ENCODE measurements at regions of chr15 and their contacts with region 1.

Region 1: DNA sequence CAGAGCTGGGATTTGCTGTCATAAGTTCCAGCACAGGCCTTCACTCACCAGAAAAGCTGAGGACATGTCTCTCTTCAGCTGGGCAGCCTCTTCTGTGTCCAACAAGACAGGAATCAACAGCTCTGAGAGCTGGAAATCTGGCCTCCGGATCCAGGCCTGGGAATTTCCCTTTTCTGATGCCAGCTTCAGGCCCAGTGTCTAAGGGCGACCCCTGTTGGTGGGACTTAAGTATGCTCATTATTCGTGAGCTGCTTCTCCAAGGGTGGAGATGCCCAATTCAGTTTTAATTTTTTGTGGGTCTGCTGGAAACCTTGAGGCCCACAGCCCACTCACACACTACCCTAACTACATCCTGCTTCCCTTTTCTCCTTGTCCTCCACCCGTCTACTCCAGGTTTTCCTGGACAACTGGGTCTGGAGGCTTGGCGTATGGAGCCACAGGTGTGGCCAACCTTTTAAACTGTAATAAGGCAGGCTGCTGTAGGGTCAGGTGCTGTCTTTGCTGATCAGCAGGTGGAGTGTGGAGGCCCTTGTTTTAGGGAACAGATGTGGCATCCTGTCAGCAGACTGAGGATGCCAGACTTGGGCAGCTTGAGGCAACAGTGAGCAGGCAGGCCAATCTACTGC is 2.6 kb upstream of the CEMIP start:
- DNase-seq: peak; percentile 56 to 63 (median 60)
- ATAC-seq: peak; percentile 54; the same call in 1 of the 3 replicates
- H3K4me3 ChIP-seq: no peak overlapping the region
- H3K27ac ChIP-seq: no peak overlapping the region
- H3K4me1 ChIP-seq: peaks cover 0 to 18% of the 10 kb centered on the region in 2 experiments; a peak in 2 of 5 replicates
- H3K27me3 ChIP-seq: peaks cover 15 to 31% of the 10 kb centered on the region in 2 experiments; a peak in 4 of 5 replicates
- CTCF ChIP-seq: peak; percentile 74 to 83 (median 83)
- EP300 ChIP-seq: no peak
- POLR2A ChIP-seq: no peak
- RAD21 ChIP-seq: peak; percentile 54 to 81

Region 2: GRCh38 chr15:80072285-80072994 is 704.1 kb before region 1 on chr15:
- CTCF ChIA-PET with region 1: no interaction called
- POLR2A ChIA-PET with region 1: no interaction called
- in situ Hi-C with region 1: no loop called
- intact Hi-C with region 1: no loop called
- DNase-seq: peak; percentile 56 to 88 (median 68)
- ATAC-seq: peak; percentile 89
- H3K4me3 ChIP-seq: peak overlapping the region; percentile 42
- H3K27ac ChIP-seq: peak overlapping the region; percentile 55; the same call in 2 of the 3 replicates
- H3K4me1 ChIP-seq: peaks cover 9 to 15% of the 10 kb centered on the region in 2 experiments; a peak in 4 of 5 replicates
- H3K27me3 ChIP-seq: no peaks in the 10 kb centered on the region
- CTCF ChIP-seq: no peak
- EP300 ChIP-seq: no peak
- POLR2A ChIP-seq: 0 out of 2 replicates have a peak, but pooled peaks have one; percentile 37
- RAD21 ChIP-seq: no peak; a peak in 1 of 4 replicates

Region 3: DNA sequence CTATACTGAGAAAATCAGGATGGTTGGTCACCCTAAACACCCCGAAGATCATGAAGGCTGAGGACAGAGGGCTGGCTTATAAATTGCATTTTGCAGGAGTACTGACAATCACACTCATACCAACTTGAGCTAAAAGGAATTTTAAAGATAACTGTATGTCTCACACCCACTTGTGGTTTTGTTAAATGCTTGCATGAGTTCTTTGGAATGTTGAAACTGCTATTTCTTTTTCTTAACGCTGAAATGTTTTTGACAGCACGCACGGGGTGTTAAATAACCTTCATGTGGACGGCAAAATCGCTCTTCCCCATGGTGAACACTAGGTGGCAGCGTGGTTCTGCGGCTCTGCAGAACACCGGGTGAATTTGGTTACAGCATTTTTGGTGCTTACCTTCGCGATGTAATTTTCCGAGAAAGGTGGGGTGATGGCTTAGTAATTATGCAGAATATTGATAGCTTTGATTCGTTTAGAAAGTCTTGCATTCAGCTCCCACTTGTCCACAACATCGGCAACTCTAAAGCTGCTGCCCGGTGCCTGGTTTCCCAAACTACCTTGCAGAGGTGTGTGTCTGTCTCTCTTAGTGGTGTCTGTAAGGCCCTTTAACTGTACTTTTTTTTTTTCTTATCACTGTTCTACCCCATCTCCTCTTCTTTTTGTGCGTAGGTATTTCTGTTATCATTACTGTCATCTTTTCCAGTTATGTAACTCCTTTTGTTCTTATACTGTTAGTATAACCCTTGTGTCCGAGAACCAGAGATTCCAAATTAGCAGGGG is 320.7 kb before region 1 on chr15:
- CTCF ChIA-PET with region 1: interaction called, 11 read pairs
- POLR2A ChIA-PET with region 1: no interaction called
- in situ Hi-C with region 1: loop called (anchors 5 kb)
- intact Hi-C with region 1: loop called (anchors 1 kb)
- DNase-seq: peak; percentile 69 to 71 (median 71)
- ATAC-seq: peak; percentile 87
- H3K4me3 ChIP-seq: no peak overlapping the region
- H3K27ac ChIP-seq: no peak overlapping the region
- H3K4me1 ChIP-seq: no peaks in the 10 kb centered on the region
- H3K27me3 ChIP-seq: peaks cover 0 to 25% of the 10 kb centered on the region in 2 experiments; a peak in 2 of 5 replicates
- CTCF ChIP-seq: peak; percentile 86 to 95 (median 92)
- EP300 ChIP-seq: no peak
- POLR2A ChIP-seq: no peak
- RAD21 ChIP-seq: peak; percentile 82 to 86

Region 4: GRCh38 chr15:80567721-80568157 is 208.8 kb before region 1 on chr15:
- CTCF ChIA-PET with region 1: interaction called, 5 read pairs
- POLR2A ChIA-PET with region 1: interaction called, 4 read pairs
- in situ Hi-C with region 1: no loop called
- intact Hi-C with region 1: loop called (anchors 1 kb)
- DNase-seq: peak; percentile 22 to 56 (median 40)
- ATAC-seq: peak; percentile 86
- H3K4me3 ChIP-seq: no peak overlapping the region
- H3K27ac ChIP-seq: no peak overlapping the region
- H3K4me1 ChIP-seq: no peaks in the 10 kb centered on the region
- H3K27me3 ChIP-seq: peaks cover 4 to 40% of the 10 kb centered on the region in 2 experiments; a peak in 3 of 5 replicates
- CTCF ChIP-seq: peak; percentile 61 to 93 (median 89)
- EP300 ChIP-seq: no peak
- POLR2A ChIP-seq: no peak
- RAD21 ChIP-seq: peak; percentile 65 to 78

Region 5: DNA sequence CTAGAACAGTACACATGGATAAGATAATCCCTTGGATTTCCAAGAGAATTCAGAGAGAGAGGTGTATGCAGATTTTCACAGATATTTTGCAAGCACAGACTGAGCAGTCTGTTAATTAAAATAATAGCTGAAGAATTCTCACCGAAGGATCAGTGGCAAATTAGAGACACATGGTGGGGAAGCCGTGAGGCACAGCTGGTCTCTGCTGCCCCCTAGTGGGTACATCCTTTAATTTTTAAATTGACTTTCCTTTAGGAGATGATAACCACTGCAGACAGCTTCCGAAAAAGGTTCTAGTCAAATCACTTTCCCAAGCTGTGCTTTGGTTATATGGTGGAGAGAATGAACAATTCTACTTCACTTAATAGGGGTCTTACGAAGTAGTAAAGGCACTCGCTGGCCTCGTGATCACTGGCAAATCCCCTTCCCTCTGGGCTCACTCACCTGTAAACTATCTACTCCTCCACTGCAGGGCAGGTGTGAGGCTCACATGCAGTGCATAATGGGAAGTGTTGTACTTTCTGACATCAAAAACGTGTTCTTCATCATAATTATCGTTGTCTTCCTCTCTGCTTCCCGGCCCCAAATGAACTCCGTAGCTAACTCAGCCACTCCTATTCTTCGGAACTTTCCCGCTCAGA is 193.6 kb after region 1 on chr15:
- CTCF ChIA-PET with region 1: interaction called, 5 read pairs
- POLR2A ChIA-PET with region 1: no interaction called
- in situ Hi-C with region 1: no loop called
- intact Hi-C with region 1: loop called (anchors 2 kb)
- DNase-seq: peak; percentile 66 to 81 (median 70)
- ATAC-seq: peak; percentile 87
- H3K4me3 ChIP-seq: no peak overlapping the region
- H3K27ac ChIP-seq: no peak overlapping the region
- H3K4me1 ChIP-seq: no peaks in the 10 kb centered on the region
- H3K27me3 ChIP-seq: no peaks in the 10 kb centered on the region
- CTCF ChIP-seq: peak; percentile 79 to 95 (median 86)
- EP300 ChIP-seq: no peak
- POLR2A ChIP-seq: no peak
- RAD21 ChIP-seq: peak; percentile 87 to 92